ENCODE measurements at regions of chr4 and their contacts with region 1.

Region 1: DNA sequence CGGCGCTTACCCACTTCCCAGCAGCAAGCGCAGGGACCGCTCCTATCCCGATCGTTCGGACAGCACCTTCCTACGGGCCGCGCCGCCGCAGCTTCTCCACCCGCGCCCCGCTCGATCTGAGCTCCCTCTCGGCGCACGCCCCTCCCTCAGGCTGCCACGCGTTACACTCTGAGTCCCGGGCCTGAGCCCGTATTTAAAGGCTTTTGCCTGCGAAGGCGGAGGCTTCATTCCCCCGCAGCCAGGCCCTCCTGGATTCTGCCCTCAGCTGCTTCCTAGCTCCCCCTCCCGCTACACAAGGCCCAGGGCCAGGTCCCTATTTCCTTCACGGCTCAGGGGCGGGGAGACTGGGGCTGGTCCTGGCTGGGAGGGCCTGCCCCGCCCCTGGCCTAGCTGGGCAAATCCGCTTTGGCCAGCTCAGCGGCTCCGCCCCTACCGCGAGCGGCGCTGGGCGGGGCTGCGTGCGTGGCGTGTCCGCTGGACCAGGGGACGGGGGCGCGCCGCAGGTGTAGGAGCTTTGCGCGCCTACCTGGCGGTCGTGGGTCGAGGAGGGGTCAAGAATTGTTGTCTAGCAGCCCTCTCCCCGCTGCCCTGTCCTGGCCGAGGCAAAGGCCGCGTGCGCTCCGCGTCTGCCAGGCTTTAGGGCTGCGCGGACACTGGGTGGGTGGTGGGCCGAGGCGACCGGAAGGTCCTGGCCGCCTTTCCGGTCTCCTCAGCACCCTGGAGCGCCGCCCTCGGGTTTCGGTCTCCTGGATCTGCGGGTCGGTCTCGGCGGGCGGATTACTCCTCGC is at the start of gene UGDH:
- DNase-seq: peak; percentile 98 to 99
- H3K4me3 ChIP-seq: peak within 1 kb of the TSS; percentile 68 to 77
- H3K27ac ChIP-seq: peak within 1 kb of the TSS; percentile 88 to 92
- H3K4me1 ChIP-seq: peaks cover 0 to 37% (median 12%) of the 10 kb centered on the region in 4 donors
- H3K27me3 ChIP-seq: no peaks in the 10 kb centered on the region
- CTCF ChIP-seq: no peak

Region 2: GRCh38 chr4:39458505-39459300 is 68.8 kb before region 1 on chr4 and contains the starts of genes LIAS and RPL9:
- intact Hi-C with region 1: loop called (anchors 5 kb)
- DNase-seq: peak; percentile 95 to 98
- H3K4me3 ChIP-seq: peak within 1 kb of the TSS; percentile 63 to 88
- H3K27ac ChIP-seq: peak within 1 kb of the TSS; percentile 87 to 97
- H3K4me1 ChIP-seq: peaks cover 0 to 30% (median 22%) of the 10 kb centered on the region in 4 donors
- H3K27me3 ChIP-seq: no peaks in the 10 kb centered on the region
- CTCF ChIP-seq: peak in 1 of 2 experiments; percentile 6

Region 3: GRCh38 chr4:39621582-39621981 is 94.1 kb after region 1 on chr4:
- intact Hi-C with region 1: loop called (anchors 5 kb)
- DNase-seq: peak; percentile 73 to 84
- H3K4me3 ChIP-seq: no peak overlapping the region
- H3K27ac ChIP-seq: peak overlapping the region; percentile 42 to 75
- H3K4me1 ChIP-seq: peaks cover 0 to 61% (median 18%) of the 10 kb centered on the region in 4 donors
- H3K27me3 ChIP-seq: no peaks in the 10 kb centered on the region
- CTCF ChIP-seq: no peak

Region 4: DNA sequence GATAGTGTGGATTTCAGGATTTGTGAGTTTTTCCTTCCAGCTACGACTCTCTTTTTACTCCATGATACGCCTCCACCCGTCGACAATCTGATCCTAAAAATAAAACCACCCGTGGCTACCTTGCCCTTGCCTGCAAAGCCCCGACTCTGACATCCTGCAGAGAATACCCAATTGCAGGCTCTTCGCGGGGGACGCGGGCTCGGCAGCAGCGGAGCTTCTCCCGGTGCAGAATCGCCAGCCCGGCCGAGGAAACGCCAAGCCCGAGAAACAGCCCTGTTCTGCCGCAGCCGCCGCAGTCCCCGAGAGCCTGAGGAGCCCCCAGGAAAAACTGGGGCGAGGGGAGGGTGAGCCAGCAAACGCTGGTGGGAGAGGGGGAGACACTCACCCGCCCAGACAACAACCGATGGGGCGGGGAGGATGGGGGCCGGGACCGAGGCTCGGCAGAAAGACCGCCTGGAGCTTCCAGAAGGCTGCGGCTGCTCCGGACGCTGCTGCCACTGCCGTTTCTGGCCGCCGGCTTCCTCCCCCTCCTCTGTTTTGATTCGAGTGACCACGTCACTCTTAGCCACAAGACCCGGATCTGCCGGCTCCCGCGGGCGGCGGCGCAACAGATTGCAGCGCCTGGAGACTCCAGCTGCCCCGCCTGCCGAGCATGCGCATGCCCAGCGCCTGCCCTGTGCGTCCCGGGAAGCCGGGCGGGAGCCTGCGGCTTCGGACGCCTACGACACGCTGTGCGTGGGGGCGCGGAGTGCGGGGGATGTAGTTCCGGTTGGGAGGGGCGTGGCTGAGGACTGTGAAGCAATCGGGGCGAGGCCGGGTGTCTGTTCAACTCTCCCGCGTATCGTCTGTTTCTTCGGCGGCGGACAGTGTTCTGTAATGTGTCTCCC is 111.1 kb after region 1 on chr4 and contains the start of gene SMIM14:
- intact Hi-C with region 1: loop called (anchors 2 kb)
- DNase-seq: peak; percentile 98 to 99
- H3K4me3 ChIP-seq: peak within 1 kb of the TSS; percentile 72 to 96
- H3K27ac ChIP-seq: peak within 1 kb of the TSS; percentile 91 to 99
- H3K4me1 ChIP-seq: peaks cover 0 to 26% (median 15%) of the 10 kb centered on the region in 4 donors
- H3K27me3 ChIP-seq: no peaks in the 10 kb centered on the region
- CTCF ChIP-seq: peak; percentile 27 to 45

Region 5: GRCh38 chr4:39697740-39698423 is 170.4 kb after region 1 on chr4 and contains the start of gene UBE2K:
- intact Hi-C with region 1: loop called (anchors 5 kb)
- DNase-seq: peak; percentile 80 to 94
- H3K4me3 ChIP-seq: peak within 1 kb of the TSS; percentile 84 to 95
- H3K27ac ChIP-seq: peak within 1 kb of the TSS; percentile 90 to 91
- H3K4me1 ChIP-seq: peaks cover 0 to 46% (median 7%) of the 10 kb centered on the region in 4 donors
- H3K27me3 ChIP-seq: no peaks in the 10 kb centered on the region
- CTCF ChIP-seq: no peak

Region 6: GRCh38 chr4:39771006-39771724 is 243.7 kb after region 1 on chr4:
- intact Hi-C with region 1: no loop called
- DNase-seq: no peak
- H3K4me3 ChIP-seq: no peak overlapping the region
- H3K27ac ChIP-seq: no peak overlapping the region
- H3K4me1 ChIP-seq: no peaks in the 10 kb centered on the region
- H3K27me3 ChIP-seq: no peaks in the 10 kb centered on the region
- CTCF ChIP-seq: no peak

Measured in tibial artery (tissue), 4 donors.